ENCODE measurements at regions of chr10 and their contacts with region 1.

Region 1: GRCh38 chr10:23438550-23439441 is at the start of gene OTUD1:
- DNase-seq: peak; percentile 98
- H3K4me3 ChIP-seq: peak within 1 kb of the TSS; percentile 69 to 98 (median 84)
- H3K27ac ChIP-seq: peak within 1 kb of the TSS; percentile 95 to 99 (median 98)
- H3K4me1 ChIP-seq: peaks cover 23 to 25% of the 10 kb centered on the region in 2 donors
- H3K27me3 ChIP-seq: no peaks in the 10 kb centered on the region
- CTCF ChIP-seq: peak in 4 of 6 experiments; percentile 26 to 49 (median 36)
- POLR2A ChIP-seq: peak in 1 of 2 donors; percentile 96
- total RNA-seq, gene OTUD1: 18.7 to 23.9 (median 20.1) TPM

Region 2: GRCh38 chr10:23368816-23369640 is 69.8 kb before region 1 on chr10:
- intact Hi-C with region 1: loop called (anchors 10 kb)
- DNase-seq: no peak
- H3K4me3 ChIP-seq: no peak overlapping the region
- H3K27ac ChIP-seq: peak overlapping the region; percentile 70 to 84 (median 78)
- H3K4me1 ChIP-seq: peaks cover 5 to 19% of the 10 kb centered on the region in 2 donors
- H3K27me3 ChIP-seq: no peaks in the 10 kb centered on the region
- CTCF ChIP-seq: no peak
- POLR2A ChIP-seq: no peak

Region 3: DNA sequence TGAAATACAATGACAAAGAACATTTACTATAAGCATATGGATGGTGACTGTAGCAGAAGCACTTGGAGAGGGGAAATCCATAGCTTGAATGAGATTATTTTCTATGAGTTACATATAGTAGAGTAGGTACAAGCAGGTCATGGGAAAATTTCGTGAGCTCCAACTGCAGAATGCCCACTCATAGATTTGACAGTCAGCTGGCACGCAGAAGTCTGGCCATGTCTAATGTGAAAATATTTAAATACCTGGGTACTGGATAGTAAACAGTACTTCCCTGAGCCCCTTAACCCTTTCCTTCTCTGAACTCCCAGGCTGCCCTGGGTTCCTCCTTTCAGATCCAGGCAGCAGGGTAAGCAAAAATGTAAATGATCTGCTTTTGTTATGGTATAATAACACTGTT is 209.8 kb after region 1 on chr10:
- intact Hi-C with region 1: no loop called
- DNase-seq: no peak
- H3K4me3 ChIP-seq: no peak overlapping the region
- H3K27ac ChIP-seq: no peak overlapping the region
- H3K4me1 ChIP-seq: no peaks in the 10 kb centered on the region
- H3K27me3 ChIP-seq: no peaks in the 10 kb centered on the region
- CTCF ChIP-seq: no peak
- POLR2A ChIP-seq: no peak

Measured in thyroid gland (tissue), 4 donors.